Right ventricle myocardium inferior (tissue), 1 donor: ENCODE measurements at regions of chr6 and their contacts with region 1.

Region 1: GRCh38 chr6:4351520-4352315 is 216.3 kb upstream of the ECI2 start:
- DNase-seq: peak; percentile 85
- ATAC-seq: peak; percentile 82

Region 2: GRCh38 chr6:4155848-4156466 is 195.8 kb before region 1 on chr6:
- intact Hi-C with region 1: no loop called
- DNase-seq: no peak
- ATAC-seq: peak; percentile 74

Region 3: GRCh38 chr6:4313044-4313686 is 38.6 kb before region 1 on chr6:
- intact Hi-C with region 1: no loop called
- DNase-seq: no peak
- ATAC-seq: peak; percentile 59

Region 4: GRCh38 chr6:4401404-4402368 is 50.0 kb after region 1 on chr6:
- intact Hi-C with region 1: no loop called
- DNase-seq: peak; percentile 69
- ATAC-seq: peak; percentile 6

Region 5: DNA sequence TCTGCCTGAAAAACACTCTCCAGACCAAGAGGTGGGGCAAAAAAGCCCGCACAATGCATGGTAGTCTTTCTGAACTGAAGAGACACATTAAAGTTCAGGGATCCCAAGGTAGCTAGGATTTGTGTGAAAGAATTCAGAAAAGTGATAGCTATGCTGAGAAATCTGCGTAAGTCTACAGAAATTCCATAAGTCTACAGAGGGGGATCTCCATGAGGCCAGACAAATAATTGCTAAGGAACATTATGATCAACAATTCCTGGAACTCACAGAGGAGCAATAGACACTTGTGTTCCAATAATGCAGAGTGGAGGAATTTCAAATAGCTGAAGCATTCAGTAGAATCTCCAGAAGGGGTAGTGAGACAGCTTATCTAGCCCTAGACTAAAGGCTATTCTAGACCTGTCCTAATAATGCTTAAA is 99.3 kb after region 1 on chr6:
- intact Hi-C with region 1: loop called (anchors 5 kb)
- DNase-seq: no peak
- ATAC-seq: no peak

Region 6: GRCh38 chr6:4460586-4461475 is 109.1 kb after region 1 on chr6:
- intact Hi-C with region 1: loop called (anchors 5 kb)
- DNase-seq: peak; percentile 89
- ATAC-seq: peak; percentile 94